ENCODE measurements at regions of chr10 and their contacts with region 1.

Region 1: GRCh38 chr10:91316486-91316885 is 93.7 kb upstream of the HECTD2 start:
- DNase-seq: no peak
- H3K4me3 ChIP-seq: no peak overlapping the region
- H3K27ac ChIP-seq: no peak overlapping the region
- H3K4me1 ChIP-seq: no peaks in the 10 kb centered on the region
- H3K27me3 ChIP-seq: no peaks in the 10 kb centered on the region
- CTCF ChIP-seq: no peak
- POLR2A ChIP-seq: no peak

Region 2: GRCh38 chr10:91354166-91355075 is 37.9 kb after region 1 on chr10:
- intact Hi-C with region 1: loop called in 1 of 2 experiments (anchors 2 kb)
- DNase-seq: no peak
- H3K4me3 ChIP-seq: no peak overlapping the region
- H3K27ac ChIP-seq: no peak overlapping the region
- H3K4me1 ChIP-seq: no peaks in the 10 kb centered on the region
- H3K27me3 ChIP-seq: no peaks in the 10 kb centered on the region
- CTCF ChIP-seq: no peak
- POLR2A ChIP-seq: no peak

Measured in adrenal gland (tissue), 19 donors.